Adrenal gland (tissue), 19 donors: ENCODE measurements at regions of chr1 and their contacts with region 1.

Region 1: DNA sequence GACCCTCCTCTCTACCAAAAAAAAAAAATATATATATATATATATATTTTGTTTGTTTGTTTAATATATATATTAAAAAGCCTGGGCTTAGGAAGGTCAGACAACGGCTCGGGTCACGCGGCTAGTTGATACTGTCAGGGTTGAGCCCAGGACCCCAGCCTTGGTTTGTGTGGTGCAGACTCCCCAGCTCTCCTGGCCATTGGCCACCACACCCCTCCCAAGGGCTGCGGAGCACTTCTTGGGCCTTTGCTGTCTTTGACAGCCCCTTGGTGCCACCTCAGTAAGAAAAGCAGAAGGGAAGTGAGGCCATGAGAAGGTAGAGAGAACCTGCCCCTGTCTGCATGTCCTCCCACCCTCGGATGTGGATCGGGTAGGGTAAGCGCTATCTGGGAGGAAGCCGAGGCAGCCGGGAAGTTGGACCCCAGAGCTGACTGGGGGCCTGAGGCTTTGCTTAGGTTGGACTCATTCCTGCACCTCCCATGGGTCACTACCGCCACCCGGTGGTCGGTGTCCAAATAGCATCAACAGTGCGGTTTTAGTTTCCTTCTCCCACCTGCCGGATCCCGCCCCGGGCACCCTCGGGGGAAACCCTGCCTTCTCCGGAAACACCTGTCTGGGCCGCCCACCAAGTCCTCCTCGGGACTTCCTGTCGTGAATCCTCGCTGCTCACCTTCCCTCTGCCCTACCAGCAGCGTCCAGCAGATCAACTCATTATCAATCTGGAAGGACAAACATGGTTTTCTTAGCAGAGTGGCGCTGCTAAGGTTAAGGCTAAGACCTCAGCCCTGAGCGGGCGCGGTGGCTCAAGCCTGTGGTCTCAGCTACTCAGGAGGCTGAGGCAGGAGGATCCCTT is 29.8 kb upstream of the GNPAT start:
- DNase-seq: peak; percentile 62 to 90 (median 79)
- H3K4me3 ChIP-seq: peak overlapping the region in 3 of 4 donors; percentile 28 to 75 (median 52)
- H3K27ac ChIP-seq: no peak overlapping the region
- H3K4me1 ChIP-seq: no peaks in the 10 kb centered on the region
- H3K27me3 ChIP-seq: no peaks in the 10 kb centered on the region
- CTCF ChIP-seq: peak; percentile 87 to 95 (median 92)
- POLR2A ChIP-seq: no peak

Region 2: GRCh38 chr1:230797942-230798418 is 413.3 kb before region 1 on chr1:
- intact Hi-C with region 1: loop called (anchors 5 to 10 kb)
- DNase-seq: peak; percentile 46 to 82 (median 71)
- H3K4me3 ChIP-seq: no peak overlapping the region
- H3K27ac ChIP-seq: no peak overlapping the region
- H3K4me1 ChIP-seq: no peaks in the 10 kb centered on the region
- H3K27me3 ChIP-seq: no peaks in the 10 kb centered on the region
- CTCF ChIP-seq: peak; percentile 26 to 78 (median 61)
- POLR2A ChIP-seq: no peak

Region 3: DNA sequence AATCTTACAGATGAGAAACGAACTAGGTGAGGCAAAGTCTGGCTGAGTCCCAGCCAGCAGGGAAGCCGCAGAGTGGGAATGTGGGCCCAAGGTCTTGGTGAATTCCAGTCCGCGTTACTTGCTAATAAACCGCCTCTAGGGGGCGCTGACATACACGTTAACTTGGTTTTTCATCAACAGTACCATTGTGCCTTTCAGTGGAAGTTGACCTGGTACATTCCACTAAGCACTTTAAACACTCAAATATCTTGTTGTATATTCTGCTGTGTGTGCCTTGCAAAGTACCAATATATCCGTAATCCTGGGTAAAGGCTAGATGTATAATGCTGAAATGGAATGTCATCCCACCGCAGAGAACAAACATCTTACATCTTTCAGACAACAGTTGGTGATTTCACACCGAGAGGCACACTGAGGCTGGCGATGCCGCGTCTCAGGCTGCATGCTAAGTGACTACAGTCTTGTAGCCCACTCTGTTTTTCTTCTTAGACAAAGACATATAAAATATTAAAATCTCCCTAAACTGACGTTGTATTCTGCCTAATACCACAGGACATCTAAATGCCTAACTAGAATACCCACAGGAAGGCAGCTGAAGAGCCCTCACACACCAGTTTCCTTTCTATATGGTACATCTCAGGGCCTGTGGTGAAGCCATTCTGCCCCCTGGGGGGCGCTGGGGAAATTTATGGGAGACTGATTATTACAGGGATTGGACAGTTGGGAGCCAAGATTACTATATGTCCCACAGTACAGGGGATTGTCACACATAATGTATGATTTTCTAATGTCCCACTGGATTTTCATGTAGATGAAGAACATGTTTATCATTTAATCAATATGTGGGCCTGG is 293.7 kb before region 1 on chr1:
- intact Hi-C with region 1: loop called (anchors 2 to 10 kb)
- DNase-seq: peak; percentile 81 to 96 (median 91)
- H3K4me3 ChIP-seq: no peak overlapping the region
- H3K27ac ChIP-seq: no peak overlapping the region
- H3K4me1 ChIP-seq: no peaks in the 10 kb centered on the region
- H3K27me3 ChIP-seq: no peaks in the 10 kb centered on the region
- CTCF ChIP-seq: peak; percentile 65 to 77 (median 74)
- POLR2A ChIP-seq: no peak

Region 4: GRCh38 chr1:231091831-231092301 is 119.4 kb before region 1 on chr1:
- intact Hi-C with region 1: loop called in 1 of 2 experiments (anchors 10 kb)
- DNase-seq: peak in 4 of 7 donors; percentile 26 to 56 (median 36)
- H3K4me3 ChIP-seq: no peak overlapping the region
- H3K27ac ChIP-seq: no peak overlapping the region
- H3K4me1 ChIP-seq: no peaks in the 10 kb centered on the region
- H3K27me3 ChIP-seq: no peaks in the 10 kb centered on the region
- CTCF ChIP-seq: peak; percentile 24 to 68 (median 52)
- POLR2A ChIP-seq: no peak

Region 5: DNA sequence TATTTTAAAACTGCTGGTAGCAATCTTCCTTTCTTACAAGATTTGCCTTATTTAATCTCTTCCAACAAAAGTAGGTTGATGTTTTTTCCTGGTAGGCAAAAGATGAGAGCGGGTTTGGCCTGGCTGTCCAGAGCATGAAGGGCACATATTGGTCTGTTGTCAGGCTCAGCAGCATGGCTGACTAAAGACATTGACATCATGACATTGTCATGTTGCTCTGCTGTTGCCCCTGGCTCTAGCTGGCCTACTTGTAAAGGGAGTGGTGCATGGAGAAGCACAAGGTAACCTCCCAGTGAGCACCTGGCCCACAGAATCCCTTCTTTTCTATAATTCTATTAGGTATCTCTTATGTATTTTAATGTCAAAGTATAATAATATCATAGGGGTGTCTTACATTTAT is 53.4 kb after region 1 on chr1:
- intact Hi-C with region 1: no loop called
- DNase-seq: no peak
- H3K4me3 ChIP-seq: no peak overlapping the region
- H3K27ac ChIP-seq: no peak overlapping the region
- H3K4me1 ChIP-seq: no peaks in the 10 kb centered on the region
- H3K27me3 ChIP-seq: no peaks in the 10 kb centered on the region
- CTCF ChIP-seq: no peak
- POLR2A ChIP-seq: no peak